ENCODE measurements at regions of chr11 and their contacts with region 1.

Region 1: GRCh38 chr11:58513747-58514367 is 6.0 kb upstream of the OR5B21 start:
- DNase-seq: no peak
- H3K4me3 ChIP-seq: no peak overlapping the region
- H3K27ac ChIP-seq: no peak overlapping the region
- H3K4me1 ChIP-seq: peaks cover 0 to 7% (median 3%) of the 10 kb centered on the region in 4 donors
- H3K27me3 ChIP-seq: peaks cover 0 to 15% (median 0%) of the 10 kb centered on the region in 4 donors
- CTCF ChIP-seq: peak; percentile 47 to 63 (median 53)
- EP300 ChIP-seq: no peak
- POLR2A ChIP-seq: no peak

Region 2: DNA sequence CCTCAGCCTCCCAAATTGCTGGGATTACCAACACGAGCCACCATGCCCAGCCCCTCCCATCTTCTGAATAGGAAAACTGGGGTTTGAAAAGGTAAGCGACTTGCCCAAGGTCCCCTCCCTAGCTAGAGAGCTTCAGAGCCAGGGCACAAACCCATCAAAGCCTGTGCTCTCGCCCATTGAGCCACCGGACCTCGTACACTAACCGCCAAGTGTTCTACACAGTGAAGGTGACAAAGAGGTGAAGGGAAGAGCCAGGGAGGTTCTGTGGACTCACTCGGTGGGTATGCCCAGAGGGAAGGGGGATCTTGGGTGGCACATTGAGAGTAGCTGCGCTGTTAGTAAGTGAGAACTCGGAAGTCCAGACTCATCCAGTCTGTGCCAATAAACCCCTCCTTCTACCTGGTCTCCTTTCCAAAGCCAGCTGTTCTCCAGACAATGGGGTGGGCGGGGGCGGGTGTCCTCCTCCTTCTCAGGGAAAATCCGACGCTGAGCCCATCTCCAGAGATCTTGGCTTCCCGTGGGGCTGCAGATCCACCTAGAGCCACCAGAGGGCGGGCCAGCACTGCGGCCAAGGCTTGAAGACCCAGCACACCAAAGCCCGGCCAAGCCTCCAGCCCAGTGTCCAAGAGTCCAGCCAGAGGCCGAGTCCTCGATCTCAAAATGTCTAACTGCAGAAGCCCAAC is 1056.8 kb before region 1 on chr11:
- intact Hi-C with region 1: loop called (anchors 5 kb)
- DNase-seq: peak; percentile 98
- H3K4me3 ChIP-seq: peak overlapping the region in 2 of 4 donors; percentile 52 to 64
- H3K27ac ChIP-seq: no peak overlapping the region
- H3K4me1 ChIP-seq: peaks cover 35 to 45% (median 45%) of the 10 kb centered on the region in 4 donors
- H3K27me3 ChIP-seq: peaks cover 0 to 63% (median 29%) of the 10 kb centered on the region in 4 donors
- CTCF ChIP-seq: peak in 2 of 3 experiments; percentile 98 to 99
- EP300 ChIP-seq: no peak
- POLR2A ChIP-seq: no peak